CD8-positive, alpha-beta T cell (primary cell): ENCODE measurements at regions of chr6 and their contacts with region 1.

Region 1: GRCh38 chr6:118917546-118918321 is 17.2 kb downstream of the MCM9 start:
- DNase-seq: no peak
- ATAC-seq: no peak
- H3K4me3 ChIP-seq: no peak overlapping the region
- H3K4me3 Mint-ChIP-seq: no peak overlapping the region
- H3K27ac ChIP-seq: no peak overlapping the region
- H3K27ac Mint-ChIP-seq: no peak overlapping the region
- H3K4me1 ChIP-seq: no peaks in the 10 kb centered on the region
- H3K4me1 Mint-ChIP-seq: peaks cover 5% of the 10 kb centered on the region
- H3K27me3 ChIP-seq: no peaks in the 10 kb centered on the region
- H3K27me3 Mint-ChIP-seq: no peaks in the 10 kb centered on the region
- CTCF ChIP-seq: no peak

Region 2: DNA sequence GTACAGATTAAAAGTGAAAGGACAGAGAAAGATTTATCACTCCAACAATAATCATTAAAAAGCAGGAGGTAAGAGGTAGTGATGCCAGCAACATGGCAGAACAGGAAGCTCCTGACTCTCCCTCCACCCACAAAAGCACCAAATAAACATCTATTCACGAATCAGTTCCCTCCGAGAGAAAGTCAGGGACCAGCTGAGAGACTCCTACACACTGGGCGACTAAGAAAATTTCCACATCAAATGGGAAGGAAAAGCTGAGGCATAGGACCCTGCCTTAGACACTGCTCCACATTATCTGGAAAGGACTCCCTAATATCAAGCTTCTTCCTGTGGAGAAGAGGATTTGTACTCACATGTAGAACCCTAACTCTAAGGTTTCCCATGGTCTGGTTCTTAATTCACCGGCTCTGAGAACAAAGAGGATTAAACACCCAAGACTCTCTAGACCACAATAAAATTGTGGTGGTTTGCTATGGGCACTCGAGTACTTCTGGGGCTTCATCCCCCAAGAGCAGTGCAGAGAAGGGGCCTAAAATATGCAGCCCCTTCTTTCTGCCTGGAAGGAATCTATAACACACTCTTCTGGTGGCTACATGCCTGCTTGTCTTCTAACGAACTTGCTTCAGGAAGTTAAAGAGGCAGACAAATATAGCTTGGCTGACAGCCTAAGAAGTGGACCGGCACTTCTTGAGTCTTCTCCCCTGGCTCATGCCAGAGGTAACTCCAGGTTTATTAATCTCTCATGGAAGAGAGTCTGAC is 53.2 kb before region 1 on chr6:
- CTCF ChIA-PET with region 1: no interaction called
- POLR2A ChIA-PET with region 1: no interaction called
- intact Hi-C with region 1: no loop called
- DNase-seq: no peak
- ATAC-seq: no peak
- H3K4me3 ChIP-seq: peak overlapping the region in 1 of 2 experiments; percentile 17
- H3K4me3 Mint-ChIP-seq: peak overlapping the region; percentile 77
- H3K27ac ChIP-seq: peak overlapping the region in 1 of 2 experiments; percentile 22
- H3K27ac Mint-ChIP-seq: peak overlapping the region; percentile 83
- H3K4me1 ChIP-seq: peaks cover 10% of the 10 kb centered on the region
- H3K4me1 Mint-ChIP-seq: peaks cover 56% of the 10 kb centered on the region
- H3K27me3 ChIP-seq: no peaks in the 10 kb centered on the region
- H3K27me3 Mint-ChIP-seq: no peaks in the 10 kb centered on the region
- CTCF ChIP-seq: no peak

Region 3: GRCh38 chr6:118899948-118900347 is 17.8 kb before region 1 on chr6:
- CTCF ChIA-PET with region 1: no interaction called
- POLR2A ChIA-PET with region 1: interaction called, 4 read pairs
- intact Hi-C with region 1: loop called in 1 of 2 experiments (anchors 2 kb)
- DNase-seq: peak in 2 of 9 experiments; percentile 49 to 61
- ATAC-seq: peak; percentile 50
- H3K4me3 ChIP-seq: no peak overlapping the region
- H3K4me3 Mint-ChIP-seq: peak overlapping the region; percentile 15
- H3K27ac ChIP-seq: no peak overlapping the region
- H3K27ac Mint-ChIP-seq: peak overlapping the region; percentile 28
- H3K4me1 ChIP-seq: peaks cover 53% of the 10 kb centered on the region
- H3K4me1 Mint-ChIP-seq: peaks cover 81% of the 10 kb centered on the region
- H3K27me3 ChIP-seq: no peaks in the 10 kb centered on the region
- H3K27me3 Mint-ChIP-seq: no peaks in the 10 kb centered on the region
- CTCF ChIP-seq: no peak